ENCODE measurements at regions of chr1 and their contacts with region 1.

Region 1: DNA sequence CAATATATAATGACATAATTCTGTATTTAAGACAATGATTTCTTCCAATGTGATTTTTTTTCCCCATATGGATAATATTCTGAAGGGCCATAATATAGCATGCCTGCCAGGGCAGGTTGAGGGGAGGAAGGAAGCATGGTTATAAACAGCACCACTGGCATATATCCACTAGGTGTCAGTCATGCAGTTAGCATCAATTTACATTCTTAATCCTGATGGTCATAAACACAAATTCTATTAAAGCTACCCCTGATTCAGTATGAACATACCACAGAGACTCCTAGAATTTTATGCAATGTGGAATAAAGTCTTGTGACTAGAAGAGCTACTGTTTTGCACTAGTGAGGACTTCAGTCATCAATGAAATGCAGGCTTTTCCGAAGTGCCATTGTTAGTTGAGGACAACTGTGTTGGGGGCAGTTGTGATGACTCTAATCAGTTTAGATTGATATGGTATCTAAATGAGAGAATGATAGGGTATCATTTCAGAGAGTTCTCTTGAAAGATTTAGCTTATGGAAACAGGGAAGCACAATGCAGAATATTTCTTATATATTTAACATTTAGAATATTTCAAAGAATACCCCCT is 342.7 kb upstream of the NR5A2 start:
- H3K4me3 ChIP-seq: no peak overlapping the region
- H3K27ac ChIP-seq: no peak overlapping the region
- H3K4me1 ChIP-seq: no peaks in the 10 kb centered on the region
- CTCF ChIP-seq: no peak; the same call in 1 of the 2 replicates

Region 2: DNA sequence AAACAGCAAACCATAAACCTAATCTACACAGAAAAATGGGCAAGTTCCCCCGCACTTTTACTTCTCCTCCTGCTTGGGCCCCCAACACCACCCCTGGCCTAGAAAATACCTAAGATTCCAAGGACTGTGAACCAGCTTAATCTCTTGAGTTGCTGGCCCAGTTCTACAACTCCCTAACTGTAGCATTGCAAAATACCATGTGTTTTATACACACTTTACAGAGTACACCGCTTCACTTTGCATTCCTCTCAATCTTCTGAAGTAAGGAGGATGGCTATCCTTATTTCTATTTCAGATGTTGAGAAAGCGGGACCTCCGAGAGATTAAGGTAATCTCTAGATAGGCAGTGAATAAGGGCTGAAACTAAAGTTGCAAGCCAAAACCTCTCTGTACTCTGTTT is 65.6 kb before region 1 on chr1:
- CTCF ChIA-PET with region 1: no interaction called
- POLR2A ChIA-PET with region 1: no interaction called
- H3K4me3 ChIP-seq: no peak overlapping the region
- H3K27ac ChIP-seq: no peak overlapping the region
- H3K4me1 ChIP-seq: no peaks in the 10 kb centered on the region
- CTCF ChIP-seq: no peak

Region 3: DNA sequence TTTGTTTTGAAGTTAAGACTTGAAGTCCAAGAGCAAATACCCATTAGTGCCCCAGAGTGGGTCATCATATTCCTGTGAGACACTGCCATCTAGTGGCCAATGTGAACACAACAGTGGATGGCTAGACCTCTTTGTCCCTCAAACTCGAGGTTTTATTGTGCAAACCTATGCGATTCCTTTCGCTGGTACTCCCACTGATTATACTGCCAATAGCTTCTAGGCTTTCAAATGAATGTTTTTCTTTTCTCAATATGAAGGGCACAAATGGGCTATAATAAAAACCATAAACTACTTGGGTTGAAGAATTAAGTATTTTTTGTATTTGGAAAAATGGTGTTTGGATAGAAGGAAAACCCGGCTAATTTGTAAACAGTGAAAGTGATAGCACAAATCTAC is 825.4 kb after region 1 on chr1:
- CTCF ChIA-PET with region 1: interaction called, 14 read pairs
- POLR2A ChIA-PET with region 1: no interaction called
- H3K4me3 ChIP-seq: no peak overlapping the region
- H3K27ac ChIP-seq: no peak overlapping the region
- H3K4me1 ChIP-seq: no peaks in the 10 kb centered on the region
- CTCF ChIP-seq: peak; percentile 85

Measured in HEK293 (cell line).